PC-3 (cell line): ENCODE measurements at regions of chr4 and their contacts with region 1.

Region 1: GRCh38 chr4:40423735-40424134 is 88.6 kb downstream of the CHRNA9 start:
- DNase-seq: no peak
- ATAC-seq: no peak
- H3K4me3 ChIP-seq: no peak overlapping the region
- H3K27ac ChIP-seq: no peak overlapping the region
- H3K4me1 ChIP-seq: no peaks in the 10 kb centered on the region
- H3K27me3 ChIP-seq: no peaks in the 10 kb centered on the region
- CTCF ChIP-seq: no peak

Region 2: GRCh38 chr4:40486534-40486933 is 62.8 kb after region 1 on chr4:
- CTCF ChIA-PET with region 1: no interaction called
- POLR2A ChIA-PET with region 1: interaction called, 14 read pairs
- intact Hi-C with region 1: no loop called
- DNase-seq: peak; percentile 73
- ATAC-seq: peak; percentile 91
- H3K4me3 ChIP-seq: no peak overlapping the region
- H3K27ac ChIP-seq: peak overlapping the region; percentile 82
- H3K4me1 ChIP-seq: peaks cover 28% of the 10 kb centered on the region
- H3K27me3 ChIP-seq: no peaks in the 10 kb centered on the region
- CTCF ChIP-seq: no peak

Region 3: GRCh38 chr4:40536032-40536431 is 112.3 kb after region 1 on chr4:
- CTCF ChIA-PET with region 1: no interaction called
- POLR2A ChIA-PET with region 1: no interaction called
- intact Hi-C with region 1: no loop called
- DNase-seq: no peak
- ATAC-seq: no peak
- H3K4me3 ChIP-seq: no peak overlapping the region
- H3K27ac ChIP-seq: no peak overlapping the region
- H3K4me1 ChIP-seq: no peaks in the 10 kb centered on the region
- H3K27me3 ChIP-seq: no peaks in the 10 kb centered on the region
- CTCF ChIP-seq: no peak